Right ventricle myocardium inferior (tissue), 1 donor: ENCODE measurements at regions of chr4 and their contacts with region 1.

Region 1: GRCh38 chr4:112284662-112285411 is 867 bp downstream of the TIFA start:
- DNase-seq: no peak
- ATAC-seq: peak; percentile 49

Region 2: DNA sequence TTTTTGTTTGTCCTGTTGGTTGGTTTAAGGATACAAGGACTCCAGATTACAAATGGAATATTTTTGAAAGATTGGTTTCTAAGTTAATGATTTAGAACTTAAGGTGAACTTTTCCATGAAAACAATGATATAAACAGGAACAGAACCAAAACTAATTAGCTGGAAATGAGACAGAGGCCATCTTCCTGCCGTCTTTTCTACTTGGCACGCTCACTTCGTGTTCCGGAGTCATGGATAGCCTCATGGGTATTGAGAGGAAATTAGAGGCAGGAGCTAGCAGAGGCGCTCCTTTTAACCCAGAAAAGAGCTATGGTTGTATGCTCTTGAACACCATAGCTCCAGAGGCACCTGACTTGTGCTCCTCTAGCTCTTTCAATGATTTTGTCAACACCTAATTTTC is 137.1 kb before region 1 on chr4:
- intact Hi-C with region 1: no loop called
- DNase-seq: no peak
- ATAC-seq: no peak

Region 3: GRCh38 chr4:112231779-112232713 is 52.8 kb before region 1 on chr4 and contains the start of gene AP1AR:
- intact Hi-C with region 1: loop called (anchors 5 kb)
- DNase-seq: peak; percentile 91
- ATAC-seq: peak; percentile 82
- total RNA-seq, gene AP1AR: 9.4 TPM